HEK293 (cell line): ENCODE measurements at regions of chr7 and their contacts with region 1.

Region 1: DNA sequence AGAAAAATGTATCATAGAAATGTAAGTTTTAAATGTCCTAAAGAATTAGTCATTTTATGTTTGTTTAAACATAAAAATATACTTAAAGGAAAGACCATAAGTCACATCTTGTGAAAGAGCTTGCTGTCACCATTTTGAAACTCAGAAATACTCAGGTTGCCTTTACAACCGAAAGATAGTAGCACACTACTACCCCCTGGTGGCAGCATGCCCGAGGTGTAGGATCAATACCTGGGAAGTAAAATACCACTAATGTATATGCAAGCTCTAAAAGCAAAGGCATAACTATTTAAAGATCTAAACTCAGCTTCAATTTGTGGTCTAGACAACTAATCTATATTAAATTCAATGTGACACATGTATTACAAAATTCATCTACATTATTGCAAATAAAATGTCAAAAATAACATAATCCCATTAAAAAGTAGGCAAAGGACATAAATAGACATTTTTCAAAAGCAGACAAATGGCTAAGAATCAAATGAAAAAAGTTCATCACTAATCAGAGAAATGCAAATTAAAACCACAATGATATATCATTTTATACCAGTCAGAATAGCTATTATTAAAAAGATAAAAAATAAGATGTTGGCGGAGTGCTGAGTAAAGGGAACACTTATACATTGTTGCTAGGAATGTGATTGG is 47.7 kb upstream of the FGL2 start:
- H3K4me3 ChIP-seq: no peak overlapping the region
- H3K27ac ChIP-seq: no peak overlapping the region
- H3K4me1 ChIP-seq: no peaks in the 10 kb centered on the region
- CTCF ChIP-seq: no peak

Region 2: GRCh38 chr7:77188731-77189437 is 58.4 kb before region 1 on chr7:
- CTCF ChIA-PET with region 1: no interaction called
- POLR2A ChIA-PET with region 1: no interaction called
- H3K4me3 ChIP-seq: no peak overlapping the region
- H3K27ac ChIP-seq: no peak overlapping the region
- H3K4me1 ChIP-seq: no peaks in the 10 kb centered on the region
- CTCF ChIP-seq: no peak

Region 3: DNA sequence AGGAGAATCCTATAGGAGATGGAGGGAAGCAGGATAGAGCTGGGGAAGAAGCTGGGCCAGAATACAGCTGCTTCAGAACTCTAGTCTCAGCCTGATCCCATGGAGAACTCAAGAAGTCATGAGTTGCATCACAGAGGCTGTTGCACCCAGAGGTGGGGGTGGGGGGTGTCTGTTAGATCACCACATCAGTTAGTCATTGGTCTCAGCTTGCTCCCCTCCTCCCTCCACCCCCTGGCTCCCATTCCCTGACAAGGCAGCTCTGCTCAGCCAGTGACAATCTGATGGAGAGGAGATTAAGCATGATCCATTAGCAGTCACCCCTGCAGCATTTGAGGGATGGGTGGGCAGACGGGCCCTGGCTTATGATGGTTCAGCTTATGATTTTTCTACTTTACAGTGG is 10.7 kb after region 1 on chr7:
- CTCF ChIA-PET with region 1: interaction called, 13 read pairs
- POLR2A ChIA-PET with region 1: no interaction called
- H3K4me3 ChIP-seq: no peak overlapping the region
- H3K27ac ChIP-seq: no peak overlapping the region
- H3K4me1 ChIP-seq: no peaks in the 10 kb centered on the region
- CTCF ChIP-seq: no peak

Region 4: GRCh38 chr7:77331938-77332695 is 84.8 kb after region 1 on chr7:
- CTCF ChIA-PET with region 1: interaction called, 12 read pairs
- POLR2A ChIA-PET with region 1: no interaction called
- H3K4me3 ChIP-seq: no peak overlapping the region
- H3K27ac ChIP-seq: no peak overlapping the region
- H3K4me1 ChIP-seq: no peaks in the 10 kb centered on the region; the same call in 1 of the 2 replicates
- CTCF ChIP-seq: no peak

Region 5: DNA sequence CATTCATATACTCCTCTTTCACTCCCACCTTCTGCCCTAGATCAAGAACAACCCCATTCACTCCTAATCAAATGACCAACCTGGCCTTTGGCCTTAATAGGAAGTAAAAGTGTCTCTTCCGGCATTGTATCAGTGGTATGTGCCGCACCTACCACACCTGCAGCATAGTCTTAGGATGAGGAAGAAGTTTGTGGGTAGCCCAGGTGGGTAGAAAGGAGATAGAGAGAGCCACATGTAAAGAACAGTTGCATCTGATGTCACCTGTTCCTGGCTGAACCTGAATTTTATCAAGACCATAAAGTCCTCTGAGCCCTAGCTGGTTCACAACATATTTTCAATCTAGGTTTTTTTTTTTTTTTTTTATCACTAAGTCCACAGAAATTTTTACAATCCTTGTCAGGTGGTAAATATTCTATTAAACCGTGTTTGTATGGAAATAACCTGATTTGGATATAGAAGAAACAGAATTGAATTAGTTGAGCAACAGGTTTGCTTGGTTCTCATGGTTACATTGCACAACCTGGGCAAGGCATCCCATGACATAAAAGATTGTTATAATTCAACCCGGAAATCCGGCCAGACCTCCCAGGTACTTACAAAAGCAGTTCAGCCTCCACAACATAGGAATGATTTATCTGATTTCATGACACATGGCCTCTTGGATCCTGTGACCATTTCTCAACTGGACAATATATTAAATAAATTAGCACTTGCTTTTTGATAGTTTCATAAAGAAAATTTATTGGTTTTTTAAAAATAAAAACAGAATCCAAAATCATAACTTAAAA is 234.5 kb after region 1 on chr7:
- CTCF ChIA-PET with region 1: no interaction called
- POLR2A ChIA-PET with region 1: no interaction called
- H3K4me3 ChIP-seq: no peak overlapping the region
- H3K27ac ChIP-seq: no peak overlapping the region
- H3K4me1 ChIP-seq: no peaks in the 10 kb centered on the region
- CTCF ChIP-seq: no peak